ENCODE measurements at regions of chr5 and their contacts with region 1.

Region 1: DNA sequence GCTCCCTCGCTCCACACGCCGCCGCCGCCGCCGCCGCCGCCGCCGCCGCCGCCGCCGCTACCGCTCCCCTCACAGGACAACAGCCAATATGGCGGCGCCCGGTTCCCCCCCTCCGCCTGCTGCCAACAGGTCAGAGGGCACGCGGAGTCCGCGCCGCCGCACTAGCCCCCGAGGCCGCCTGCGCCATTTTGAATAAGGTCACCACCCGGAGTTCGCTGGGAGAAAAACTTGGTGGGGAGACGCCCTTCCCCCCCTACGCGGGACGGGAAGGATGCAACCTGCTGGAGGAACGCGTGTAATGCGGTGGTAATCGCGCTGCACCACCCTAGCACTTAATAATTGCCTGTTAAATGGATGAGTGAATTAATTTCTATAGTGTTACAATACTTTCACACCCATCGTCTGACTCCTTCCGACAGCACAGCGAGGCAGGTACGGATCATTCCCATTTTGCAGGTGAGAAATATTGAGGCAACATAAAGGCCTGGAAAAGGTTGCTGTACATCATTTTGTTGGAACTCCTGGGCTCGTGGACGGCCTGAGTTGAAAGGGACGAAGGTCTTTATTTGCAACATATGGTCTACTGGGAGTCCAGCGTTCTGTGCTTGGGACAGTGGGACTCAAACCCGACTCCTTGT is at the start of gene FAM193B:
- DNase-seq: peak; percentile 86
- H3K4me3 ChIP-seq: peak within 1 kb of the TSS; percentile 80 to 96 (median 84)
- H3K27ac ChIP-seq: peak within 1 kb of the TSS; percentile 25
- H3K4me1 ChIP-seq: peaks cover 15% of the 10 kb centered on the region
- H3K27me3 ChIP-seq: no peaks in the 10 kb centered on the region
- CTCF ChIP-seq: peak; percentile 16 to 41
- total RNA-seq, gene FAM193B: 30.7 to 63.3 TPM

Region 2: DNA sequence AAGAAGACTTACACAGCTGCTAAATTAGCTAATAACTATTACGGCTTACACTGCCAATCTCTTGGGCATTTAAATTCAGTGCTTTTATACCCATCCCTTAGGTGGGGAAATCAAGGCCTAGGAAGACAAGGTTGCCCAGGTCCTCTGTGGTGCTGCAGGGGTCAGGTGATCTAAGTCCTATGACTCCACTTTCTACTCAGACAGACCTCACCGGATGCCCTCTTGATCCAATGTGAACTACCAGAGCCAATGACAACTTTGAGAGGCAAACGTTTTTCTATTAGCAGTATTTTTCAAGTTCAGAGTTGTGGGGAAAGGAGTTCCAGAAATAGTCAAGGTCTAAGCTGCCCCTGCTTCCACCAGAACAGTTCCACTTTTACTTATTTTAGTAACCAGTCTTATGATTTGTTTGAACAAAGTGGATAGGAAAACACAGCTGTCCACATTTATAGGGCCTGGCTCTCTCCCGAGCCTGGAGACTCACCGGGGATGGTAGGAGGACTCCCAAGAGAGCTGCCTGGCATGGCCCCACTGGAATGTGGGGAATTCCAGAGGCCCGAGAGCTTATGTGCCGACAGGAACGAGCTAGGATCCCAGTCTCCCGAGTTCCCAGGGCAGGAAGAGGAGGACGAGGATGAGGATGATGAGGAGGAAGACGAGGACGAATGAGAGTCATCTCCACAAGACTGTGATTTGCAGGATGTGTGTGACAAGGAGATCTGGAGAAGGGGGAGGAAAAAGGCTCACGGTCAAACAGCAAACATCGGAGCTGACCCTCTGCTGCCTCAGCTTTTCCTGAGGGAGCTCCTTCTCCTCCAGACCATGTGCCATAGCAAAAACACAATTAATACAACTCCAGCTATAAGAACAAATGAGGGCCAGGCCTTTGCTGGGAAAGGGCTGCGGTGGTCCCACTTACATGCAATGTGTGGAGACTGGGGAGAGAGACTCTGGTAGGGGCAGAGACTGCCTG is 16.9 kb before region 1 on chr5:
- CTCF ChIA-PET with region 1: no interaction called
- dilution Hi-C with region 1: no loop called
- in situ Hi-C with region 1: no loop called
- intact Hi-C with region 1: loop called (anchors 2 kb)
- DNase-seq: peak; percentile 67
- H3K4me3 ChIP-seq: no peak overlapping the region
- H3K27ac ChIP-seq: peak overlapping the region; percentile 62
- H3K4me1 ChIP-seq: peaks cover 43% of the 10 kb centered on the region
- H3K27me3 ChIP-seq: no peaks in the 10 kb centered on the region
- CTCF ChIP-seq: no peak

Measured in mammary epithelial cell (primary cell).